ENCODE measurements at regions of chr4 and their contacts with region 1.

Region 1: DNA sequence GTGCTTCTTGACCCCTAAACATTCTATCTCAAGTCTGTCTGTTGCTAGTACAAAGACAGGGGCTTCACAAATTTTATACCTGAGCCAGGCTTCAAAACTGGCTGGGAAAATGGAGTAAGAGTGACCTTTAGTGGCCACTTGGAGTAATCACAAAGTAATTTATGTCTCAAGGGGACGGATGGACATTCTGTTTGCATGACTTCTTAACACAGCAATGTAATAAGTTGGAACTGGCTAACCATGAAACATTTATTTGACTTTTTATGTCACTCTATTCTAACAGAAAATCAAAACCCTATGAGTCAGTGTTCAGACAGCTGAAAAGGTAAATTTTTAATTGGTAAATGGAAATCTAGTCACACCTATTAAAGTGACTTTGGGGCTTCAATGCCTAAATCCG is 600.6 kb downstream of the ANKRD50 start:
- DNase-seq: peak; percentile 54
- H3K4me3 ChIP-seq: no peak overlapping the region
- H3K27ac ChIP-seq: no peak overlapping the region
- H3K4me1 ChIP-seq: no peaks in the 10 kb centered on the region
- CTCF ChIP-seq: peak; percentile 76

Region 2: DNA sequence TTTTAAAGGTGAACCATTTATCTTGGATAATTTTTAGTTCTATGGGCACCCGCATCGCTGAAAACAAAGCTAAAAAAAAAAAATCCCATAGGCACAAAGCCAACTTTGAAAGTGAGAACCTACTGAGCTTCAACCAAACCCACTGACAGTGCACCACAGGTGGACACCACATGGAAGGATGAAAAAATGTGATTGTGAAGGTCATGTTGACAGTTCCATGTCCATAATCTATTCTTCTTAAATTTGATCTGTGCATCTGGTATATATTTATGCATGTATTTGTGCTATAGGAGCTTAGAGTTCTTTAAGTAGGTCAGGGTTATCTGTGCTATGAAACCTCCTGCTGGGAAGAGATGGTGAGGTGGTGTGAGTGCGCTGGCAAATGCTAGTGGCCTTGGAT is 341.0 kb before region 1 on chr4:
- CTCF ChIA-PET with region 1: no interaction called
- POLR2A ChIA-PET with region 1: no interaction called
- intact Hi-C with region 1: loop called (anchors 5 kb)
- DNase-seq: no peak
- H3K4me3 ChIP-seq: no peak overlapping the region
- H3K27ac ChIP-seq: no peak overlapping the region
- H3K4me1 ChIP-seq: peaks cover 2% of the 10 kb centered on the region
- CTCF ChIP-seq: no peak

Region 3: GRCh38 chr4:124135409-124135813 is 23.5 kb after region 1 on chr4:
- CTCF ChIA-PET with region 1: no interaction called
- POLR2A ChIA-PET with region 1: no interaction called
- intact Hi-C with region 1: no loop called
- DNase-seq: no peak
- H3K4me3 ChIP-seq: no peak overlapping the region
- H3K27ac ChIP-seq: no peak overlapping the region
- H3K4me1 ChIP-seq: no peaks in the 10 kb centered on the region
- CTCF ChIP-seq: no peak

Region 4: DNA sequence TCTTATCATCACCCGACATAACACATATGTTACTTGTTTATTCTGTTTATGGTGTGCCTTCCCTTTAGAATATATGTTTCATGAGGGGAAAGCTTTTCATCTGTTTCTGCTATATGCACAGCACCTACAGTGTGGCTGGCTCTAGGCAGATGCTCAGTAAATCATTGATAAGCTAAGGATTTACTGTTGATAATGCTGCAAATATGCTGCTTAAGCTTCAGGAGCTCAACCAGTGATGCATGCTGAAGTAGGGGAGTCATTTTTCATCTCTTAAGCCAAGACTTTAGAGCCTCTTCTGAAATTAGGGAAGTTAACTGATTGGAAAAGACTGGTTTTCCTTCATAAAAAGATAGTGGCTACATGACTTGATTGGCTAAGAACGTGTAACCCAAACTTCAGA is 1219.2 kb after region 1 on chr4:
- CTCF ChIA-PET with region 1: no interaction called
- POLR2A ChIA-PET with region 1: no interaction called
- intact Hi-C with region 1: no loop called
- DNase-seq: no peak
- H3K4me3 ChIP-seq: no peak overlapping the region
- H3K27ac ChIP-seq: no peak overlapping the region
- H3K4me1 ChIP-seq: no peaks in the 10 kb centered on the region
- CTCF ChIP-seq: no peak